Right ventricle myocardium inferior (tissue), 1 donor: ENCODE measurements at regions of chrX and their contacts with region 1.

Region 1: GRCh38 chrX:19904778-19905367 is 17.5 kb upstream of the SH3KBP1 start:
- DNase-seq: no peak
- ATAC-seq: peak; percentile 52

Region 2: GRCh38 chrX:19849464-19850080 is 55.3 kb before region 1 on chrX:
- intact Hi-C with region 1: no loop called
- DNase-seq: no peak
- ATAC-seq: no peak

Region 3: GRCh38 chrX:19990556-19991349 is 85.9 kb after region 1 on chrX and contains the start of gene BCLAF3:
- intact Hi-C with region 1: loop called (anchors 2 kb)
- DNase-seq: peak; percentile 94
- ATAC-seq: peak; percentile 99
- total RNA-seq, gene BCLAF3: 5.5 TPM

Region 4: DNA sequence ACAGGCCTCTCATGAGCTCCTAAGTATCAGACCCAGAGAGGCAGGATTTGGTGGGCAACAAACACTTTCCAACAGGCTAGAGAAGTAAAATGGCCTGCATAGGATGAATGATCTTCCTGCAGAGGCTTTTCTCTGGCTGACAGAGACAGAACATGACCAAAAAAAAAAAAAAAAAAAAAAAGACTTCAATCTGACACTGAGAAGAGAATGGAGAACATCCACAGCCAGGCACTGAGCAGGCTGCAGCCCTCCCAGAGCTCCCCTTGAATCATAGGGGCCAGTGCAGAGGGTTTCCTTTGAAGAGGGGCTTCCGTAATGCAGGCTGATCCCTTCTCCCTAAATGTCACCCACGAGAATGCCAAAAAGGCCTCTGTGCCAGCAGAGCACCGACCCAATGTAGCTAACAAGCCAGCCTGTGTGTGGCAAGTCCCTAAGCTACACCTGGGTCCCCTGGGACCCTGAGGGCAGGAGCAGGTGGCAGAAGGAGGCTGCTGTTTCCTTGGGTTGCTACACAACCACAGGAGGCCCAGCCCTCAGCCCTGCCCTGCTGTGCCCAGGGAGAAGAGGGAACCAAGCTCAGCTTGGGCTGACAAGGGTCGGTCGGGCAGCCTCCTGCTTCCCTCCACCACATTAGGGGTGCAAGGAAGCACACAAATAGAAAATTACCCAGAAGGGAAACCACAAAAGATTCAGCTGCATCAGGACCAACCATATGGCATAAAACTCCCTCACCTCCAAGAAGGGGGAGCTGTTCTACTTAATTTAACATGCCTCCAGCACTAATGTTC is 156.3 kb after region 1 on chrX:
- intact Hi-C with region 1: loop called (anchors 5 kb)
- DNase-seq: no peak
- ATAC-seq: no peak

Region 5: DNA sequence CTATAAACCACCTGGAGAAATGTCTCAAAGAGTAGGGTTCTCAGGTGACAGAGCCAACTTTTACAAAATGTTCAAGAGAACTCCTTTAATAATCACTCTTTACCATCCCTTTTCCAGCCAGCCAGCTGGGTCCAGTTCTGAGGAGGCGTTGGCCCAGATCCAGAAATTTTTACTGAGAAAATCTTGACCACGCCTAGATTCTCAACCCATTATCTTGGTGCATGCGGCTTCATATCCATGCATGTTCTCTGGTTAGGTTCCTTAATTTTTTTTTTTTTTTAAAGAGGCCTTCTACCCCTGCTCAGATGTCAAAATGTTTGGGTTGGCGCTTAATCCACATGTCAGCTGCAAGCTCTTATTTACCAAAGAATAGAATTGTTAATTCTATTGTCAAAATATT is 223.8 kb after region 1 on chrX:
- intact Hi-C with region 1: loop called (anchors 2 kb)
- DNase-seq: no peak
- ATAC-seq: no peak